ENCODE measurements at regions of chr16 and their contacts with region 1.

Region 1: DNA sequence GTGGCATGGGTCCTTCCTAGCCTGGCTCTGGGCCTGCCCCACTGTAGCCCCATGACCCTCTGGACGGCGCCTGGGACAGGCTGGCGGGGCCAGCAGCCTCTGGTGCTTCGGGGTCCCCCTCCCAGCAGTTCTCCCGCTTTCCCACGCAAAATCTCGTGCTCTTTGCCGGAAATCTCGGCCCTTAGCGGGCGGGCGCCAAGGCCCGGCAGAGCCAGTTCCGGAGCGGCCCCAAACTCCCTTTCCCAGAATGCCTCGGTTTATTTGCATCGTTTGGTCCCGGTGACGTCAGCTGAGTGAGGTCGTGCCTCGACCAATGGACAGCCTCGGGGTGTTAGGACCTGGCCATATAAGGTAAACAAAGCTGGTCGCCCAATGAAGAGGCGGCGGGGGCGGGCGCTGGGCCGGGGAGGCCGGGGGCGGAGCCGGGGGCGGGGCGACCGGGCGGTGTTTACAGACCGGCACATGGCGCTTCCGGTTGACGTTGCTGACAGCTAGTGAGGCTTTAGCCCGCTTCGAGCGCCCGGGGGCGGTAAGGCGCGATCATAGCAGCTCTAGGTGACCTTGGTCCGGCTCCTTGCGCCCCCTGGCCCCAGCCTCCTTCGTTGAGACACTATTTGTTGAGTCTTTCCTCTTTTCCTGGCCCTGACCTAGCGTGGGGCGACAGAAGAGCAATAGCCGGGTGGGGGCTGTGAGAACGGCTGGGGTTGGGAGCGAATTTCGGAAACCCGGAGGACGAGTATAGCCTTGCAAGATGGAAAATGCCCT is 1.5 kb upstream of the UBALD1 start:
- DNase-seq: peak; percentile 100
- ATAC-seq: peak; percentile 63
- H3K4me3 ChIP-seq: peak overlapping the region; percentile 58 to 88 (median 88)
- H3K27ac ChIP-seq: peak overlapping the region; percentile 98
- H3K4me1 ChIP-seq: peaks cover 82% of the 10 kb centered on the region
- H3K27me3 ChIP-seq: no peaks in the 10 kb centered on the region; a peak in 1 of 5 replicates
- CTCF ChIP-seq: peak; percentile 78
- EP300 ChIP-seq: 0 out of 4 replicates have a peak, but pooled peaks of 1 of the 2 experiments have one; percentile 8
- POLR2A ChIP-seq: peak; percentile 65 to 68
- RAD21 ChIP-seq: peak; percentile 46; the same call in 1 of the 2 replicates

Region 2: DNA sequence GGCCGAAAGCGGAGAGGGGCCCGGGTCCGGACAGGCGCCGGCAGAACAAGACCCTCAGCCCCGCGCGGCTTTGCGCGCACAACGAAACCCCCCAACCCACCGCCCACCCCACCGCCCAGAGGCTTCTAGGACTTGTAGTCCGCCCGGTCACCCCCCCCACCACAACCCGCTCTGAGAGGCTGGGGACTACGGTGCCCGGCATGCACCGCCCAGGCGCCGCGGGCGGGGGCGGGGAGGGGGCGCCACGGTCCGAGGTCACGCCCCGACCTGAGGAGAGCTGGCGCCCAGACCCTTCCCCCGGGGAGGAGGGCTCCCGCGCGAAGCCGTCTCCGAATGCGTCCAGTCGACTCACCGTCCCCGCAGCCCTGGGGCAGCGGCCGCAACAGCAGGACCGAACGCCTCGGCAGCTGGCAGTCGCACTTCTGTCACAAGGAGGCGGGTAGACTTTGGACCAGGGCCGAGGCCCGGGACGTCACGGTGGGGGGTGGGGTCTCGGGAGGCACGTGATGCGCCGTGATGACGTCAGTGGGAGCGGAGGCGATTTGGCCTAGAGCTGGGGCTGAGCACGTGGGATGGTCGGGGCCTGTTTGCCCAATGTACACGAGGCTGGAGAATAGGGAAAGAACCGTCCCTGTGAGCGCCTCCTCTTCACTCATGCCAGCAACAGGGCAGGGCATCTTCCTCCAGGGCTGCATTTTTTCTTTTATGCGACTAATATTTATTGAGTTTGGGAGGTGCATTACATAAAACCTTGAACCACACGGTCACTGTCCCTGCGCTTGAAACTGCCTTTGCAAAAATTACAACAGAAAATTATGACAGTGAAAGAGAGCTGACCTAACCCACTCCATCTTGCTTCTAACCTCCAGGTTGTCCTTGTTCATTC is 77.6 kb before region 1 on chr16 and contains the start of gene CDIP1:
- CTCF ChIA-PET with region 1: no interaction called
- POLR2A ChIA-PET with region 1: interaction called, 10 read pairs
- in situ Hi-C with region 1: no loop called
- intact Hi-C with region 1: loop called (anchors 2 kb)
- DNase-seq: peak; percentile 91
- ATAC-seq: peak; percentile 86
- H3K4me3 ChIP-seq: peak within 1 kb of the TSS; percentile 77 to 90 (median 88)
- H3K27ac ChIP-seq: peak within 1 kb of the TSS; percentile 93
- H3K4me1 ChIP-seq: peaks cover 37% of the 10 kb centered on the region
- H3K27me3 ChIP-seq: no peaks in the 10 kb centered on the region
- CTCF ChIP-seq: peak; percentile 39
- EP300 ChIP-seq: peak; percentile 6 to 39; a peak in 1 of 4 replicates
- POLR2A ChIP-seq: peak; percentile 97 to 98
- RAD21 ChIP-seq: peak; percentile 58; the same call in 1 of the 2 replicates
- total RNA-seq, gene CDIP1: 56.7 and 62.2 TPM in 2 replicates

Region 3: DNA sequence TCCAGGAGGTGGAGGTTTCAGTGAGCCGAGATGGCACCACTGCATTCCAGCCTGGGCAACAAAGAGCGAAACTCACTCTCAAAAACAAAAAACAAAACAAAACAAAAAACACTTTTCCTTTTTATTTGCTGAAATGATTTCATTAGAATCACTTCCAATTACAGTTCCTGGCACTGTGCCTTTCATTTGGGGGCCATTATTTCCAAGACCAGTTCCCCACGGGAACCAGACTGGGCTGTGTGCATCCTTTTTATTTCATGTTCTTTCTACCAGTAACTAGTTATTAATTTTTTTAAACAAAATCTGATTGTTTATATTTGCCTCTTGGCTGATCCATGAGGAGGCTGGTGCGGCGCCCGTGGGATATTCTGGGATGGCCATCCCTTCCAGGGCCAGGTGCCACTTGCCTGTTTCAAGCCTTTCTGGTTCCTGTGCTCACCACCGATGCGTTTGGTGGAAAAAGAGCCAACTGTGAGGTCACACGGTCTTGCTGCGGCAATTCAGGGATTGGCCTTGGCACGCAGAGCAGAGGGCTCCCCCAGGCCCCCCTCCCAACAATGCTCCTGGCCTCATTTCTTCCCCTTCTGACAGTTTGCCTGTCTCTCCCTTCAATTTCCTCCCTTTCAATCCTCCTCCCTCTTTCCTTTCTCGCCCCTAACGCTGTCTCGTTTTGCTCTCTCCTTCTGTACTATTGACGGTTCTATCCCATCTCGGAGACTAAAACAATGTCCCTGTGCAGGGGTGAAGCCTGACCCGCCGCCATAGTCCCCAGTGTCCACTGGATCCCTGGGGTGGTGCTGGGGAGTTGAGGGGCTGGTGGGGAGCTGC is 15.0 kb before region 1 on chr16:
- CTCF ChIA-PET with region 1: no interaction called
- POLR2A ChIA-PET with region 1: no interaction called
- in situ Hi-C with region 1: no loop called
- intact Hi-C with region 1: no loop called
- DNase-seq: no peak
- ATAC-seq: no peak
- H3K4me3 ChIP-seq: no peak overlapping the region
- H3K27ac ChIP-seq: no peak overlapping the region
- H3K4me1 ChIP-seq: peaks cover 33% of the 10 kb centered on the region
- H3K27me3 ChIP-seq: peaks cover 4 to 65% of the 10 kb centered on the region in 2 experiments; a peak in 4 of 5 replicates
- CTCF ChIP-seq: no peak
- EP300 ChIP-seq: no peak
- POLR2A ChIP-seq: no peak
- RAD21 ChIP-seq: no peak

Region 4: GRCh38 chr16:4660454-4661007 is 44.3 kb after region 1 on chr16:
- CTCF ChIA-PET with region 1: no interaction called
- POLR2A ChIA-PET with region 1: interaction called, 39 read pairs
- in situ Hi-C with region 1: loop called (anchors 5 kb)
- intact Hi-C with region 1: no loop called
- DNase-seq: peak; percentile 84
- ATAC-seq: peak; percentile 67
- H3K4me3 ChIP-seq: no peak overlapping the region
- H3K27ac ChIP-seq: peak overlapping the region; percentile 68
- H3K4me1 ChIP-seq: peaks cover 73% of the 10 kb centered on the region
- H3K27me3 ChIP-seq: no peaks in the 10 kb centered on the region
- CTCF ChIP-seq: peak; percentile 16; the same call in 1 of the 2 replicates
- EP300 ChIP-seq: 0 out of 4 replicates have a peak, but pooled peaks of 1 of the 2 experiments have one; percentile 5
- POLR2A ChIP-seq: no peak
- RAD21 ChIP-seq: no peak

Region 5: GRCh38 chr16:4734063-4734729 is 118.0 kb after region 1 on chr16 and contains the starts of genes ANKS3 and DNAAF8:
- CTCF ChIA-PET with region 1: no interaction called
- POLR2A ChIA-PET with region 1: interaction called, 16 read pairs
- in situ Hi-C with region 1: no loop called
- intact Hi-C with region 1: no loop called
- DNase-seq: peak; percentile 96
- ATAC-seq: peak; percentile 96
- H3K4me3 ChIP-seq: peak within 1 kb of the TSS; percentile 98 to 100 (median 100)
- H3K27ac ChIP-seq: peak within 1 kb of the TSS; percentile 80
- H3K4me1 ChIP-seq: peaks cover 20% of the 10 kb centered on the region
- H3K27me3 ChIP-seq: no peaks in the 10 kb centered on the region; a peak in 2 of 5 replicates
- CTCF ChIP-seq: peak; percentile 12; the same call in 1 of the 2 replicates
- EP300 ChIP-seq: no peak
- POLR2A ChIP-seq: peak; percentile 46 to 68
- RAD21 ChIP-seq: peak; percentile 48; the same call in 1 of the 2 replicates
- total RNA-seq, gene ANKS3: 6.6 and 15.9 TPM in 2 replicates
- total RNA-seq, gene DNAAF8: 0.38 and 0.44 TPM in 2 replicates

Measured in HepG2 (cell line).